ENCODE measurements at regions of chr1 and their contacts with region 1.

Region 1: DNA sequence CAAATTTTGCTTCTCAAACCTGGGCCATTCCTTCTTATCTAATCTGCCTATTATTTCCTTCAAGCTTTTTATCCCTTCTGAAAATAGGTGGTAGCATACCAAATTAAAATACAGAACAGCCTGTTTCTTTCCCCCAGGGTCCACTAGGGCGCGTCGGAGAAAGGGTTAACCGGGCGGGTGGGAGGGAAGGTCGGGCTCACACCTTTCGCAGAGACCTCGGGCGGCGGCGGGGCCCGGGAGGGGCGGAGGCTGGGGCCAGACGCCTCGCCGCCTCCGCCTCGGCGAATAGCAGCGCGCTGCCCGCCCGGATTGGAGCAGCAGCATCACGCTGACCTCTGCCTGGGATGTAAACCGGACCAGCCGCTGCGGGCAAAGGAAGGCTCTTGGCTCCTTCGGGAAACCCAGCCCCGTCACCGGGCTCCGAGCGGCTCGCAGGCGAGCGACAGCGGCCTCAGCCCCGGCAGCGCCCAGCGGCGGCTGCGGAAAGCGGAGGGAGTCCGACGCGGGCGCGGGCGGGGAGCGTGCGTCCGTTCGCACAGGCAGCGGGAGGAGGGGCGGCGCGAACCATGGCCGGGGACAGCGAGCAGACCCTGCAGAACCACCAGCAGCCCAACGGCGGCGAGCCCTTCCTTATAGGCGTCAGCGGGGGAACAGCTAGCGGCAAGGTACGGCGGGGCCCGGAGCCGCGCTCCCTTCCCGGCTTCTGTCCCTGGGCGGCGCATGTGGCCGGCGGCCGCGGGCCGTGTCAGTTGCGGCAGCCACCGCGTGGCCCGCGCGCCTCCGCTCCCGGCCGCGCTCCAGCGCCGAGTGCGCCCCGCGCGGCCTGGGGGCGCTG is at the start of gene UCK2:
- DNase-seq: peak; percentile 67
- H3K4me3 Mint-ChIP-seq: peak within 1 kb of the TSS; percentile 82
- H3K27ac Mint-ChIP-seq: peak within 1 kb of the TSS; percentile 82
- H3K4me1 Mint-ChIP-seq: peaks cover 24% of the 10 kb centered on the region
- H3K27me3 Mint-ChIP-seq: peaks cover 34% of the 10 kb centered on the region

Region 2: GRCh38 chr1:165842671-165843129 is 15.2 kb after region 1 on chr1:
- CTCF ChIA-PET with region 1: interaction called, 13 read pairs
- DNase-seq: peak; percentile 45
- H3K4me3 Mint-ChIP-seq: no peak overlapping the region
- H3K27ac Mint-ChIP-seq: no peak overlapping the region
- H3K4me1 Mint-ChIP-seq: peaks cover 48% of the 10 kb centered on the region
- H3K27me3 Mint-ChIP-seq: no peaks in the 10 kb centered on the region

Region 3: DNA sequence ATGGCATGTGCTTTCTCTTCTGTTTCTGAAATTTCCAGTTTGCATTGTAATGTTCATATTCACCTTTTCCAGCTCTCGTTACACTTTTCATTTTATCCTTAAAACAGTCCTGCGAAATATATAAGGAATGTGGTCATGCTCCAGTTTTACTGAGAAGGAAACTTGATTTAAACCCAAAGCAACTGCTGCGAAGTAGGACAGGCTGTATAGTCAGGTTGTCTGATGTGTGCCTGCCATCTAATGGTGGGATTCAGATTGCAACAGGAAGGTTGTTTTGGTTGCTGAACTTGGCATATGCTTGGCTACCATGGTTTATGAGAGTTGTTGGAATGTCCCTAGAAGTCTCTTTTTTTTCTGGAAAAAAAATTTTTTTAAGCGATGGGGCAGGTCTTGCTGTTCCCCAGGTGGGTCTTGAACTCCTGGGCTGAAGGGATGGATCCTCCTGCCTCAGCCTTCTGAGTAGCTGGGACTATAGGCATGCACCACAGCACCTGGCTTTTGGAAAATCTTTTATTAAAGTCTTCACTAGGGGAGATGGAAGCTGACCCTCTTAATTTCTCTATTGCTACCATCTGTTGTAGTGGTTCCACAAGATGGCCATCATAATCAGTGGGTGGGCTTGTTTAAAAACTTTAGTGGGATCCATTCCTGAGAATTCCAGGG is 86.8 kb after region 1 on chr1:
- CTCF ChIA-PET with region 1: interaction called, 15 read pairs
- DNase-seq: peak; percentile 81
- H3K4me3 Mint-ChIP-seq: no peak overlapping the region
- H3K27ac Mint-ChIP-seq: no peak overlapping the region
- H3K4me1 Mint-ChIP-seq: no peaks in the 10 kb centered on the region
- H3K27me3 Mint-ChIP-seq: no peaks in the 10 kb centered on the region